ENCODE measurements at regions of chr7 and their contacts with region 1.

Region 1: GRCh38 chr7:130649004-130649790 is 19.4 kb downstream of the COPG2 start:
- DNase-seq: peak; percentile 42
- ATAC-seq: peak; percentile 95
- H3K4me3 Mint-ChIP-seq: peak overlapping the region; percentile 32
- H3K27ac Mint-ChIP-seq: peak overlapping the region; percentile 87
- H3K4me1 Mint-ChIP-seq: peaks cover 33% of the 10 kb centered on the region
- H3K27me3 Mint-ChIP-seq: no peaks in the 10 kb centered on the region

Region 2: GRCh38 chr7:130205084-130205947 is 443.9 kb before region 1 on chr7 and contains the start of gene TMEM209:
- CTCF ChIA-PET with region 1: no interaction called
- POLR2A ChIA-PET with region 1: interaction called, 3 read pairs
- intact Hi-C with region 1: loop called in 1 of 2 experiments (anchors 1 kb)
- DNase-seq: peak; percentile 96
- ATAC-seq: peak; percentile 98
- H3K4me3 Mint-ChIP-seq: peak within 1 kb of the TSS; percentile 93
- H3K27ac Mint-ChIP-seq: peak within 1 kb of the TSS; percentile 100
- H3K4me1 Mint-ChIP-seq: peaks cover 35% of the 10 kb centered on the region
- H3K27me3 Mint-ChIP-seq: no peaks in the 10 kb centered on the region
- total RNA-seq, gene TMEM209: 41.0 to 57.0 TPM

Region 3: DNA sequence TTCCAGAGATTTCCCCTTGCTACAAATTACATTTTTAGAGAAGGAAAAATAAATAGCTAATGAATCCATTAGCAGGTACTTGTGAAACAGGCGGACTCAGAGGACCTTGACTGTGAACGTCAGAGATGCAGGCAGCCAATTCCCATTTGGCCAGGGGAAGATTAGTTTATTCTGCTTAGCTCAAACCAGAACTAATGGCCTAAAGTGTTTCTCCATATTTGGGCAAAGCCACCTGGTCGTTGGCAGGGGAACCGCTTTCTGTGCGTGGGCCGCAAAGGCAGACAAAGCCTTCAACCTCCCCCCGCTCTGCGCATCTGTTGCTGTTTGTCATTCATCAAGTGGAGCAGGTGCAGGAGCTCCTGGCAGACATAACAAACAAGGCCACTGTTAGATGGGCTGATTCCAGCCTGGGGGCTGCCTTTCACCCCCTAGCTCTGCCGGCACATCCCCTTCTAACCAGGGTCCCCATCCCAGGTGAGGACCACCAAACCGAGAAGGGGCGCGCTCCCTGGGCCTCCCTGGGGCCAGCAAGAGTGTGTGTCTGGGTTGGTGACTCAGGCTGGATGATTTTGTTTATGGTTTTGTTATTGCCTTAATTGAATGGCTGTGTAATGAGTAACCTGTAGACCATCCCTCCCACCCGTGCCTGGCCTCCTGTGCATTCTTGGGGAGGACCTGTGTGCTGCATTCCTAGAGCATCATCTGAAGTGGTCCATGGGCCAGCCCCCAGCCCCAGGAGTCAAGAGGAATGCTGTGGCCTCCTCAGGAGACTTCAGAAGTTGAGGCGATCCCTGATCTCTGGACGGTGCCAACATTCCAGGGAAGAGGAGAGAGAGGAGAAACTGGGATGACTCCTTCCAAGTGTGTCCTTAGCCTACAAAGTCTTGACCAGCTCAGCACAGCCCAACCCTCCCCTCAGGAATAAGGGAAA is 283.4 kb before region 1 on chr7:
- CTCF ChIA-PET with region 1: no interaction called
- POLR2A ChIA-PET with region 1: no interaction called
- intact Hi-C with region 1: loop called in 1 of 2 experiments (anchors 5 kb)
- DNase-seq: peak; percentile 57
- ATAC-seq: no peak
- H3K4me3 Mint-ChIP-seq: no peak overlapping the region
- H3K27ac Mint-ChIP-seq: no peak overlapping the region
- H3K4me1 Mint-ChIP-seq: peaks cover 43% of the 10 kb centered on the region
- H3K27me3 Mint-ChIP-seq: no peaks in the 10 kb centered on the region

Region 4: GRCh38 chr7:130668257-130669084 is 19.3 kb after region 1 on chr7 and contains the start of gene COPG2:
- CTCF ChIA-PET with region 1: no interaction called
- POLR2A ChIA-PET with region 1: no interaction called
- intact Hi-C with region 1: loop called in 1 of 2 experiments (anchors 1 kb)
- DNase-seq: peak; percentile 86
- ATAC-seq: peak; percentile 97
- H3K4me3 Mint-ChIP-seq: peak within 1 kb of the TSS; percentile 81
- H3K27ac Mint-ChIP-seq: peak within 1 kb of the TSS; percentile 70
- H3K4me1 Mint-ChIP-seq: peaks cover 16% of the 10 kb centered on the region
- H3K27me3 Mint-ChIP-seq: peaks cover 5% of the 10 kb centered on the region
- total RNA-seq, gene COPG2: 23.5 to 25.9 TPM

Region 5: GRCh38 chr7:131188367-131189339 is 539.5 kb after region 1 on chr7:
- CTCF ChIA-PET with region 1: no interaction called
- POLR2A ChIA-PET with region 1: no interaction called
- intact Hi-C with region 1: loop called in 1 of 2 experiments (anchors 10 kb)
- DNase-seq: peak; percentile 65
- ATAC-seq: peak; percentile 84
- H3K4me3 Mint-ChIP-seq: peak overlapping the region; percentile 58
- H3K27ac Mint-ChIP-seq: peak overlapping the region; percentile 96
- H3K4me1 Mint-ChIP-seq: peaks cover 55% of the 10 kb centered on the region
- H3K27me3 Mint-ChIP-seq: no peaks in the 10 kb centered on the region